PC-9 (cell line): ENCODE measurements at regions of chr2 and their contacts with region 1.

Region 1: GRCh38 chr2:220228299-220229006 is 601.0 kb downstream of the SLC4A3 start:
- DNase-seq: peak; percentile 80 to 97
- H3K4me3 ChIP-seq: peak overlapping the region; percentile 45
- H3K27ac ChIP-seq: peak overlapping the region; percentile 90
- H3K4me1 ChIP-seq: peaks cover 67% of the 10 kb centered on the region
- H3K27me3 ChIP-seq: no peaks in the 10 kb centered on the region
- CTCF ChIP-seq: no peak

Region 2: DNA sequence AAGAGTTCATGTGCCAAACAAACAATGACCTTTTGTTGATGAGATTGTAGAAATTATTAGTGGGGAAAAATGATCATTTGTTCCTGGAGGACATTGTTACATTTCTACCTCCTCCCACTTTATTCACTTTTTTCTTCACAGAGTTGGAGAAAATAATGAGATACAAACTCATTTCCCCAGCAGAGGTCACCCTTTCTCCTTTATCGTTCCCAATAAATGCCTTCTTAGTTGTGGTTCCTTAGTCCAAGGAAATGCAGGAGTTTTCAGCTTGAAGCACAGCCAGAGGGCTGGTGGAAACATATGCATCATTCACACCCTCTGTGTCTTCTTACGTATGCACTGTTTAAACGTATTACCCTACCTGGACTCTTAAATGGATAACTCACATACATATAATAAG is 492.2 kb before region 1 on chr2:
- CTCF ChIA-PET with region 1: no interaction called
- POLR2A ChIA-PET with region 1: no interaction called
- intact Hi-C with region 1: loop called (anchors 2 kb)
- DNase-seq: peak; percentile 31 to 56
- H3K4me3 ChIP-seq: no peak overlapping the region
- H3K27ac ChIP-seq: no peak overlapping the region
- H3K4me1 ChIP-seq: no peaks in the 10 kb centered on the region
- H3K27me3 ChIP-seq: no peaks in the 10 kb centered on the region
- CTCF ChIP-seq: peak; percentile 73

Region 3: DNA sequence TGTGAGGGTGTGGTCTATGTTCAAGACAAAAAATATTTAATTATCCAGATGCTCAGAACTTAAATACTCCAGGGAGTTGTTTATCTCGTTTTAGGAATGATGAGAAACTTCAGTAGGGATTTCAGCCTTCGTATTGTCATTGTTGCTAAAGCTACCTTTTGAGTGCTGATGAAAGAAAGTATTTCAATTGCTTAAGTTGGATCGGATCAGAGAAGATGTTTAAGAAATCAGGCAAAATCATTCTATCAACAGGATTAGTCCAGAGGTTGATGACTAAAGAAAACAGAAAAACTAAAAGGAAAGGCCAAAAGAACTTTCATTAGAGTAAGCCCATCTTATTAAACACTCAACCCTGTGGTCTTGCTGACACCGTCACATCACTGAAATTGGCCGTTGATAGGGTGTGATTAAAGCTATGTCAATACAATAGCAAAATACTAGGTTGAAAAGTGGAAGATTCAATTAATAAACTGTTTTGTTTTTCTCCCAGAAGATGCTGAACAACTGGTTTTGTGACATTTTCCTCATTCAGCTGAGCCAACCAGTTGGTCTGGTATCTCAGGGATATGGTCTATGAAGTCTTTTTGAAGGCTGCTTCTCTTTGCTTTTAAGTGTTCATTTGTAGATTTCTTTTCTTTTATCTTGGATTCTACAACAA is 49.3 kb before region 1 on chr2:
- CTCF ChIA-PET with region 1: no interaction called
- POLR2A ChIA-PET with region 1: interaction called, 13 read pairs
- intact Hi-C with region 1: loop called (anchors 1 kb)
- DNase-seq: peak; percentile 17 to 80
- H3K4me3 ChIP-seq: peak overlapping the region; percentile 23; the same call in 1 of the 2 replicates
- H3K27ac ChIP-seq: peak overlapping the region; percentile 83
- H3K4me1 ChIP-seq: peaks cover 18% of the 10 kb centered on the region
- H3K27me3 ChIP-seq: no peaks in the 10 kb centered on the region
- CTCF ChIP-seq: no peak

Region 4: GRCh38 chr2:220279372-220279771 is 50.9 kb after region 1 on chr2:
- CTCF ChIA-PET with region 1: no interaction called
- POLR2A ChIA-PET with region 1: no interaction called
- intact Hi-C with region 1: loop called (anchors 1 kb)
- DNase-seq: peak; percentile 29 to 69
- H3K4me3 ChIP-seq: no peak overlapping the region
- H3K27ac ChIP-seq: peak overlapping the region; percentile 48
- H3K4me1 ChIP-seq: peaks cover 49% of the 10 kb centered on the region
- H3K27me3 ChIP-seq: no peaks in the 10 kb centered on the region
- CTCF ChIP-seq: no peak

Region 5: GRCh38 chr2:220445429-220446105 is 217.1 kb after region 1 on chr2:
- CTCF ChIA-PET with region 1: no interaction called
- POLR2A ChIA-PET with region 1: no interaction called
- intact Hi-C with region 1: loop called (anchors 10 kb)
- DNase-seq: no peak
- H3K4me3 ChIP-seq: no peak overlapping the region
- H3K27ac ChIP-seq: no peak overlapping the region
- H3K4me1 ChIP-seq: peaks cover 10% of the 10 kb centered on the region; the same call in 1 of the 2 replicates
- H3K27me3 ChIP-seq: no peaks in the 10 kb centered on the region
- CTCF ChIP-seq: no peak

Region 6: GRCh38 chr2:220619558-220620217 is 391.2 kb after region 1 on chr2:
- CTCF ChIA-PET with region 1: no interaction called
- POLR2A ChIA-PET with region 1: no interaction called
- intact Hi-C with region 1: loop called (anchors 2 kb)
- DNase-seq: peak; percentile 77 to 96
- H3K4me3 ChIP-seq: peak overlapping the region; percentile 28; the same call in 1 of the 2 replicates
- H3K27ac ChIP-seq: peak overlapping the region; percentile 93
- H3K4me1 ChIP-seq: peaks cover 39% of the 10 kb centered on the region
- H3K27me3 ChIP-seq: no peaks in the 10 kb centered on the region
- CTCF ChIP-seq: no peak

Region 7: GRCh38 chr2:220811952-220812570 is 583.6 kb after region 1 on chr2:
- CTCF ChIA-PET with region 1: no interaction called
- POLR2A ChIA-PET with region 1: no interaction called
- intact Hi-C with region 1: loop called (anchors 1 kb)
- DNase-seq: peak; percentile 27 to 89
- H3K4me3 ChIP-seq: peak overlapping the region; percentile 32; the same call in 1 of the 2 replicates
- H3K27ac ChIP-seq: peak overlapping the region; percentile 87
- H3K4me1 ChIP-seq: peaks cover 32% of the 10 kb centered on the region
- H3K27me3 ChIP-seq: no peaks in the 10 kb centered on the region
- CTCF ChIP-seq: no peak